Dendritic cell treated with granulocyte-macrophage colony-stimulating factor and Interleukin-4, amounts not matched to agents 40 ng/mL and 50 ng/mL, for 4 days (primary cell): ENCODE measurements at regions of chr19 and their contacts with region 1.

Region 1: DNA sequence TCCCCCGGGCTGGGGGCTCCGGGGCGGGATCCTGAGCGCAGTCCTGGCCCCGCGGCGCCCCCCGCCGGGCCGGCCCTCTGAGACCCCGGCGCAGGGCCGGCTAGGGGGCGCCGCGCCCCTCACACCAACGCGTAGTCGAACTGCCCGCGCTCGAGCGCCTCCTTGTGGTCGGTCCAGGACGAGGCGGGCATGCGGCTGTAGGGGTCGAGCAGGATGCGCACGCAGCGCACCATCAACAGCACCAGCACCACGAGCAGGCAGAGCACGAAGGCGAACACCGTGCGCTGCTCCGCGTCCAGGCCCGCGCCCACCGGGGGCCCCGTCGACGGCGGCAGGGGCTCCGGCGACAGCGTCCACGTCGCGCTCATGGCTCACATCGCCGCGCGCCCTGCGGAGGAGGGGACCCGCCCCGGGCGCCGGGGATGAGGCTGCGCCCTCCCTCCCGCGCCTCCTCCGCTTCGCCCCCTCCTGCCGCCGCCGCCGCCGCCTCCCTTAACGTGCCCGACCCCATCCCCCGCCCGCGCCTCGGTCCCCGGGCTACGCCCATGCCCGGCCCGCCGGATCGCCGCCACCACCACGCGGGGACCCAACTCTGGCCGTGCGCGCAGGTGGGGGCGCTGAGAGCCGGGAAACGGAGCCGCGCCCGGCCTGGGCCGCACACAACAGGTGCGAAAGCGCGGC is 624 bp downstream of the CTXN1 start:
- H3K4me3 Mint-ChIP-seq: peak overlapping the region; percentile 78
- H3K27ac Mint-ChIP-seq: no peak overlapping the region
- H3K4me1 Mint-ChIP-seq: peaks cover 57% of the 10 kb centered on the region
- H3K27me3 Mint-ChIP-seq: peaks cover 23% of the 10 kb centered on the region

Region 2: GRCh38 chr19:7852851-7853769 is 72.2 kb before region 1 on chr19:
- intact Hi-C with region 1: loop called (anchors 2 kb)
- H3K4me3 Mint-ChIP-seq: no peak overlapping the region
- H3K27ac Mint-ChIP-seq: no peak overlapping the region
- H3K4me1 Mint-ChIP-seq: peaks cover 10% of the 10 kb centered on the region
- H3K27me3 Mint-ChIP-seq: peaks cover 6% of the 10 kb centered on the region

Region 3: GRCh38 chr19:7868676-7869452 is 56.4 kb before region 1 on chr19:
- intact Hi-C with region 1: no loop called
- H3K4me3 Mint-ChIP-seq: peak overlapping the region; percentile 62
- H3K27ac Mint-ChIP-seq: peak overlapping the region; percentile 27
- H3K4me1 Mint-ChIP-seq: peaks cover 56% of the 10 kb centered on the region
- H3K27me3 Mint-ChIP-seq: peaks cover 79% of the 10 kb centered on the region